ENCODE measurements at regions of chr16 and their contacts with region 1.

Region 1: DNA sequence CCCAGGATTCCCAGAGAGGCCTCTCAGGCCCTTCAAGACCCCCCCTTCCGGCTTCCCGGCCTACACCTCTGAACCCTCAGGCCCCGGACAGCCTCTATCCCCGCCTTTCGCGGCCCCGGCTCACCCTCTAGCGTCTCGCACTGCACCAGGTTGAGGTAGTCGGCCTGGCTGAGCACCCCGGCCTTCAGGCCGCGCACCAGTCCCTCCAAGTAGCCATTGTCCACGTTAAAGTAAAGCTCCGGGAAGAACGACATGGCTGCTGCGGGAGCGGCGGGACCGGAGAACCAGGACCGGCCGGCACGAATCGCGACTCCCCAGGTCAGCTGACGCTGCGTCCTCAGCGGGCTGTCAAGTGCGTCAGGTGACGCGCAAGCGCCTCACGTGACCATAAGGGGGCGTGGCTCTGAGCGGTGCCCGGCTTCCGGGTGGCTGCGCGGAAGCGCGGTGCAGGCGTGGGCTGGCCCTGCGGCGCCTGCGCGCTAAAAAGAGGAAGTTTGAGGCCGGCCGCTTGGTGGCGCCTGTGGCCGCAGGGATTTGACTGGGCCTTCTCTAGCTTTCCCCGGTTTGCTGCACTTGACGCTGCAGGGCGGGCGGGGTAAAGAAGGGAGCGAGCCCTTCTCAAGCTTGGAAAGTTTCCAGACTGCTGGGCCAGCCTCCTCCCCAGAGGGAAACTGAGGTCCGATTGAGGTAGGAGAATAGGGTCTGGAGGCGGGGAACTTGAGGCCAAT is at the start of gene ATP6V0D1:
- DNase-seq: peak; percentile 94
- ATAC-seq: peak; percentile 92
- H3K4me3 ChIP-seq: peak within 1 kb of the TSS; percentile 87
- H3K27ac ChIP-seq: peak within 1 kb of the TSS; percentile 86
- H3K4me1 ChIP-seq: peaks cover 19% of the 10 kb centered on the region
- H3K27me3 ChIP-seq: no peaks in the 10 kb centered on the region
- CTCF ChIP-seq: peak; percentile 82 to 97 (median 93); a peak in 5 of 6 replicates
- EP300 ChIP-seq: 0 out of 4 replicates have a peak, but pooled peaks of 1 of the 2 experiments have one; percentile 13
- POLR2A ChIP-seq: peak; percentile 86
- RAD21 ChIP-seq: peak; percentile 81
- polyA plus RNA-seq, gene ATP6V0D1: 28.1 to 30.2 TPM

Region 2: DNA sequence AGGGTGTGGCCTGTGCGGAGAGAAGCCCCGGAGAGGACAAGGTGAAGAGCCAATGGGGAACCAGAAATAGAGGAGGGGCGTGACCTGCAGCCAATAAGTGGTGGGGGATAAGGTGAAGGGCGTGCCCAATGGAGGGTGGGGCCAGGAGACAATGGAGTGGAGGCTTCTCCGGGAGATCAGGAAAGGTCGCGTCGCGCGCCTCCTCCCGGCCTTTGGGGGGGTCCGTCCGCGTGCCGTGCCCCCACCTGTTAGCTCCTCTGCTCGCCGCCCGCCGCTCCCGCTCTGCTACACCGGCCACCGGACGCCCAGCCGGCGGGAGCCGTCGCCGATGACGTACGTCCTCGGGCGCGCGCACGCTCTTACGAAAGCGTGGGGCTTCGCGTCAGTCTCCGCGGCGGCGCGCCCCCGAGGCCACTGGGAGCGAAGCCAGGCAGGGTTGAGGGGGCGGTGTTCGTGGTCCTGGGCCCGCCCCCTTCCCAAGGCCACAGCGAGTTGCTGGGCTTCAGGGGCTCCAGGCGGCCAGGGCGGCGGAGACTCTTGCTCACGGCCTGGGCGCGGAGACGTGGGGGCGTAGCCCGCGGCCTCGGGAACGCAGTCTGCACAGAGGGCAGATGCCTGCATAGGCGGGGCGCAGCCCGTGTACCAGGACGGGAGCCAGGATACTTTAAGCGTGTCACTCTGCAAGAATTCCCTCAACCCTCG is 297.2 kb before region 1 on chr16 and contains the start of gene MATCAP1:
- CTCF ChIA-PET with region 1: no interaction called
- POLR2A ChIA-PET with region 1: no interaction called
- RAD21 ChIA-PET with region 1: no interaction called
- SMC1A ChIA-PET with region 1: no interaction called
- in situ Hi-C with region 1: no loop called
- intact Hi-C with region 1: no loop called
- DNase-seq: peak; percentile 91
- ATAC-seq: peak; percentile 96
- H3K4me3 ChIP-seq: peak within 1 kb of the TSS; percentile 76
- H3K27ac ChIP-seq: peak within 1 kb of the TSS; percentile 84
- H3K4me1 ChIP-seq: peaks cover 4% of the 10 kb centered on the region
- H3K27me3 ChIP-seq: peaks cover 0 to 3% of the 10 kb centered on the region in 2 experiments; a peak in 2 of 4 replicates
- CTCF ChIP-seq: no peak
- EP300 ChIP-seq: no peak
- POLR2A ChIP-seq: peak; percentile 76
- RAD21 ChIP-seq: no peak
- polyA plus RNA-seq, gene MATCAP1: 2.8 to 6.6 TPM

Region 3: DNA sequence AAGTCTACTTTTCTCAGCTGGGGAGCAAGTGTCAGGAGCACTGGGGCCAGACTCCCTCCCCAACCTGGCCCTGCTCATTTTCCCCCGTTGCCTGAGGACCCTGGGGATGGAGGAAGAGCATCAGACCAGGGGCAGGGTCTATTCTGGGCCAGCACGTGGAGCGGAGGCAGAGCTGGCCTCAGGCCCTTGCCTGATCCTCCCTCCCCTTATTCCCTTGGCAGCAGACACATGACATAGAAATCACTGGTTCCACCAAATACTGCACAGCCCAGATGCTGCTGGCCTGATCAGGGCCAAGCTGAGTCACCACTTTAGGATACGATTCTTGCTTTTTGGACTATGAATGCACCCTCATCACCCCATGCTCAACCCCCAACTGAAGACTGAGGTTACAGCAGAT is 18.1 kb after region 1 on chr16:
- CTCF ChIA-PET with region 1: interaction called, 72 read pairs
- POLR2A ChIA-PET with region 1: interaction called, 3 read pairs
- RAD21 ChIA-PET with region 1: interaction called, 69 read pairs
- SMC1A ChIA-PET with region 1: interaction called, 17 read pairs
- in situ Hi-C with region 1: no loop called
- intact Hi-C with region 1: no loop called
- DNase-seq: no peak
- ATAC-seq: no peak
- H3K4me3 ChIP-seq: no peak overlapping the region
- H3K27ac ChIP-seq: no peak overlapping the region
- H3K4me1 ChIP-seq: no peaks in the 10 kb centered on the region
- H3K27me3 ChIP-seq: no peaks in the 10 kb centered on the region
- CTCF ChIP-seq: no peak
- EP300 ChIP-seq: no peak
- POLR2A ChIP-seq: no peak
- RAD21 ChIP-seq: no peak

Region 4: DNA sequence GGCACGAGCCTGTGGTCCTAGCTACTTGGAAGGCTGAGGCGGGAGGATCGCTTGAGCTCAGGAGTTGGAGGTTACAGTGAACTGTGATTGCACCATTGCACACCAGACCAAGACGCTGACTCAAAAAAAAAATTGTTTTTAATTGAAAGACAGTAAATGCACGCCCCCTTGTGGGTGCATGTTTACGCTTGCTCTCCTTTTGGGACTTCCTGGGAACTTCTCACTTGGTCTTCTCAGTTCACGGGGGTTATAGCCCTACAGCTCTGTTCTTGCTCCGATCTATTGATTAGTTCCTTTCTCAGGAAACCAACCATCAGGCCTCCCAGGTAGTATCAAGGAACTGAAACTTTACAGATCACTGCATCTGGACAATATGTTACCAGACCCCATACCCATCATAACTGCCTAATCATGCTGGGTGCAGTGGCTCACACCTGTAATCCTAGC is 33.4 kb after region 1 on chr16:
- CTCF ChIA-PET with region 1: interaction called, 252 read pairs
- POLR2A ChIA-PET with region 1: interaction called, 11 read pairs
- RAD21 ChIA-PET with region 1: interaction called, 79 read pairs
- SMC1A ChIA-PET with region 1: interaction called, 88 read pairs
- in situ Hi-C with region 1: loop called (anchors 5 kb)
- intact Hi-C with region 1: loop called (anchors 1 kb)
- DNase-seq: peak; percentile 90
- ATAC-seq: peak; percentile 71
- H3K4me3 ChIP-seq: no peak overlapping the region
- H3K27ac ChIP-seq: peak overlapping the region; percentile 38; the same call in 1 of the 2 replicates
- H3K4me1 ChIP-seq: peaks cover 45% of the 10 kb centered on the region
- H3K27me3 ChIP-seq: no peaks in the 10 kb centered on the region
- CTCF ChIP-seq: peak; percentile 66 to 82 (median 71); a peak in 5 of 6 replicates
- EP300 ChIP-seq: no peak
- POLR2A ChIP-seq: no peak
- RAD21 ChIP-seq: peak; percentile 77

Region 5: GRCh38 chr16:67530013-67530939 is 49.3 kb after region 1 on chr16:
- CTCF ChIA-PET with region 1: interaction called, 10 read pairs
- POLR2A ChIA-PET with region 1: no interaction called
- RAD21 ChIA-PET with region 1: interaction called, 7 read pairs
- SMC1A ChIA-PET with region 1: interaction called, 3 read pairs
- in situ Hi-C with region 1: no loop called
- intact Hi-C with region 1: no loop called
- DNase-seq: no peak
- ATAC-seq: peak; percentile 66
- H3K4me3 ChIP-seq: peak overlapping the region; percentile 90; the same call in 1 of the 2 replicates
- H3K27ac ChIP-seq: peak overlapping the region; percentile 22; the same call in 1 of the 2 replicates
- H3K4me1 ChIP-seq: peaks cover 34% of the 10 kb centered on the region
- H3K27me3 ChIP-seq: no peaks in the 10 kb centered on the region
- CTCF ChIP-seq: no peak
- EP300 ChIP-seq: 0 out of 4 replicates have a peak, but pooled peaks of 1 of the 2 experiments have one; percentile 5
- POLR2A ChIP-seq: peak; percentile 57
- RAD21 ChIP-seq: no peak

Region 6: DNA sequence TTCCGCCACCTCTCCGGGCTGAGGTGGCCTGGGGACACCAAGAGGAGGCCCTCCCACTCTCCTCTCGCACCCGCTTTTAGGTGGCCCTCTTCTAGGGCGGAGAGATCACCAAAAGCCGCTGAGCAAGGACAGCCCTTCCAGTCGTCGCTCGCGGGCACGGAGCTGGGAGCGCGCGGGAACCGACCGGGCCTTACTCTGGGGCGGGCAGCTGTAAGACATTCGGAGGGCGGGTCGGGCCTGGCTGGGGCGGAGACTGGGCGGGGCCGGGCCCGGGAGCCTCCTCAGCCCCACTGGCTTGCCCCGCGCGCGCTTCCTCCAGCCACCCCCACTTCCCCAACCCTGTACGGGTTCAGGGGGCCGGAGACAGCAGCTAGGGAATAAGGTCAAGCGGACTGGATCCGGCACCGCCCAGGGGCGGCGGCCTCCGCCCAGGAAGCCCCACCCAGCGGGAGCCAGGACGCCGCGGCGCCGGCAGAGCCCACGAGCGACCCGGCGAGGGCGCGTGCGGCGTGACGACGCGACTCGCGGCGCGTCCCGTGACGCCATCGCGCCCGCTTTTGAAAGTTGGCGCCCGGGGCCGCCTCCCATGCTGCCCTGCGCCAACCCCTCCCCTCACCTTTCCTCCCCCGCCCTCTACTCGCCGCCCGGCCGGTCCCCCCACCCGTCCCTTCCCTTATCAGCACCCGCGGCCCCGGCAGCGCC is 81.0 kb after region 1 on chr16:
- CTCF ChIA-PET with region 1: interaction called, 6 read pairs
- POLR2A ChIA-PET with region 1: interaction called, 5 read pairs
- RAD21 ChIA-PET with region 1: interaction called, 10 read pairs
- SMC1A ChIA-PET with region 1: interaction called, 6 read pairs
- in situ Hi-C with region 1: no loop called
- intact Hi-C with region 1: no loop called
- DNase-seq: peak; percentile 89
- ATAC-seq: peak; percentile 91
- H3K4me3 ChIP-seq: peak overlapping the region; percentile 74
- H3K27ac ChIP-seq: peak overlapping the region; percentile 87
- H3K4me1 ChIP-seq: peaks cover 15% of the 10 kb centered on the region
- H3K27me3 ChIP-seq: no peaks in the 10 kb centered on the region
- CTCF ChIP-seq: no peak
- EP300 ChIP-seq: 0 out of 4 replicates have a peak, but pooled peaks of 1 of the 2 experiments have one; percentile 10
- POLR2A ChIP-seq: peak; percentile 83
- RAD21 ChIP-seq: no peak

Region 7: GRCh38 chr16:67667817-67668494 is 187.0 kb after region 1 on chr16:
- CTCF ChIA-PET with region 1: interaction called, 11 read pairs
- POLR2A ChIA-PET with region 1: interaction called, 7 read pairs
- RAD21 ChIA-PET with region 1: interaction called, 7 read pairs
- SMC1A ChIA-PET with region 1: interaction called, 8 read pairs
- in situ Hi-C with region 1: no loop called
- intact Hi-C with region 1: no loop called
- DNase-seq: peak; percentile 70
- ATAC-seq: peak; percentile 88
- H3K4me3 ChIP-seq: no peak overlapping the region
- H3K27ac ChIP-seq: no peak overlapping the region
- H3K4me1 ChIP-seq: peaks cover 34% of the 10 kb centered on the region
- H3K27me3 ChIP-seq: no peaks in the 10 kb centered on the region
- CTCF ChIP-seq: peak; percentile 91 to 94 (median 92)
- EP300 ChIP-seq: no peak
- POLR2A ChIP-seq: no peak
- RAD21 ChIP-seq: peak; percentile 67